ENCODE measurements at regions of chr11 and their contacts with region 1.

Region 1: GRCh38 chr11:83156150-83156995 is 558 bp upstream of the PCF11 start:
- DNase-seq: peak; percentile 100
- H3K4me3 ChIP-seq: peak overlapping the region; percentile 95
- H3K27ac ChIP-seq: peak overlapping the region; percentile 71
- H3K4me1 ChIP-seq: peaks cover 56% of the 10 kb centered on the region
- CTCF ChIP-seq: no peak

Region 2: DNA sequence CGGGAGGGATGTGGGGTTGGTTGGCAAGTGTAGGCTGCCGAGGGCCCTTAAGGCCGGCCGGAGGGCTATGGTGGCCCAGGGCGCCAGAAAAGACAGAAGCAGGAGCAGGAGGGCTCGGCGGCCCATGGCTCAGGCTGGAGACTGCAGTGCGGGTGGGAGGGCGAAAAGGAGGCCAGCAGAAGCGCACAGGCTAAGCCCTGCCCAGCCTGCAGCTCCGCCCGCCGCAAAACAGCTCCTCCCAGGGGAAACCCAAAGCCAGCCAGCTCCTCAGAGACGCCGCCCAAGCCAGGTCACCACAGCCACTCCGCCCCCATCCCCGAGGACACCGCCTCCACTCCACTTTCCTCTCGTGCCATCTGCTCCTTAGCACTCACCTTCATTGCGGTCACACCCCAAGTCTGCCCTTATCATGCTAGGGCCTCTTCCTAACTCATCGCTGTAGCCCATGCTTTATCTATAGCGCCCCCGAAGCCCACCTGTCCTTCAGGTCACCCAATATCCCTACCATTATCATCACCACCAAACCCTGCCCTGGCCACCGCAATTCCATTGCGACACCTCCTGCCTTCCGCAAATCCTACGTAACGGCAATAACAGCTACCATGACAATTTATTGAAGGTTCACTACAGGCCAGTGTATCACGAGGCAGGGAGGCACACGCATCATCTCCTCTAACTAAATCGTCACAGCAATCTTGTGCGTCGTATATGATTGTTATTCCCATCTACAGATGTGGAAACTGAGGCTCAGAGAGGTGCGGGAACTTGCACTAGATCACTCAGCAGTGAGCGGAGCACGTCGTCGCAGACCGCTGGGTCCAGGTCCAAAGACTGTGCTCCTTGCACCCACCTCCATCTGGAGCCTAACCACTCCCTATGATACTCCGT is 255.9 kb before region 1 on chr11 and contains the start of gene PRCP:
- CTCF ChIA-PET with region 1: no interaction called
- POLR2A ChIA-PET with region 1: interaction called, 36 read pairs
- intact Hi-C with region 1: loop called (anchors 2 kb)
- DNase-seq: peak; percentile 89
- H3K4me3 ChIP-seq: peak within 1 kb of the TSS; percentile 79
- H3K27ac ChIP-seq: peak within 1 kb of the TSS; percentile 67
- H3K4me1 ChIP-seq: peaks cover 55% of the 10 kb centered on the region
- CTCF ChIP-seq: peak; percentile 48
- total RNA-seq, gene PRCP: 6.5 and 11.0 TPM in 2 replicates

Region 3: GRCh38 chr11:83035070-83035854 is 121.1 kb before region 1 on chr11:
- CTCF ChIA-PET with region 1: no interaction called
- POLR2A ChIA-PET with region 1: no interaction called
- intact Hi-C with region 1: no loop called
- DNase-seq: peak; percentile 81
- H3K4me3 ChIP-seq: peak overlapping the region; percentile 2
- H3K27ac ChIP-seq: no peak overlapping the region
- H3K4me1 ChIP-seq: peaks cover 41% of the 10 kb centered on the region
- CTCF ChIP-seq: no peak

Region 4: DNA sequence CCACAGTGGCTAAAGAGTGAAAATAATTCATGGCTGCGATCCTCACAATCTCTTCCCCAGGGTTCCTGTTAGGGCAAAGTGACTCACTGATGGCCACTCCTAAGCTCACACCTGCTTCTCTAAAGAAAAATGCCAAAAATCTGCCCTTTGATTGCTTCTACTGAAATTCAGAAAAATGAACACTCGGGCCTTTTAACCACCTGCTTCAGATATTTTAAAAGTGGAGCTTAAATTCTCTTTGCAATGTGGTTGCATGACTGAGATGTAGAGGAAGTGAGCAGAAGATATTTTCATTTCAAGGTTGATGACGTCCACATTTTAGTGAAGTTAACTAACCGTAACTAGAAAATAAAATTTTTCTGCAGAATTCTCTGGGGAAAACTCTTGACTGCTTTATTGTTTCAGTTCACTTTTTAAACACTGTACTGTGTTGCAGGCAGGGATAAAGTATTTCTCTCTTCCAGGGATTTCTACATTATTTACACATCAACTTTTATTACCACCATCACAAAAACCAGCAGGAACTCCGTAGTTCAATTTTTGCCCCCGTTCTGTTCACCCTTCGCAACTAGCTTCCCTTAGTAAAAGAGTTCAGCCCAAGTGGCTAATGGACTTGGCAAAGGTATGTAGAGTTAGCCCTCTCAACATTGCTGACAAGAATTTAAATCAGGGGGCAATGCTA is 93.2 kb before region 1 on chr11:
- CTCF ChIA-PET with region 1: interaction called, 4 read pairs
- POLR2A ChIA-PET with region 1: interaction called, 13 read pairs
- intact Hi-C with region 1: loop called (anchors 1 kb)
- DNase-seq: peak; percentile 96
- H3K4me3 ChIP-seq: peak overlapping the region; percentile 62
- H3K27ac ChIP-seq: peak overlapping the region; percentile 100
- H3K4me1 ChIP-seq: peaks cover 95% of the 10 kb centered on the region
- CTCF ChIP-seq: no peak

Region 5: DNA sequence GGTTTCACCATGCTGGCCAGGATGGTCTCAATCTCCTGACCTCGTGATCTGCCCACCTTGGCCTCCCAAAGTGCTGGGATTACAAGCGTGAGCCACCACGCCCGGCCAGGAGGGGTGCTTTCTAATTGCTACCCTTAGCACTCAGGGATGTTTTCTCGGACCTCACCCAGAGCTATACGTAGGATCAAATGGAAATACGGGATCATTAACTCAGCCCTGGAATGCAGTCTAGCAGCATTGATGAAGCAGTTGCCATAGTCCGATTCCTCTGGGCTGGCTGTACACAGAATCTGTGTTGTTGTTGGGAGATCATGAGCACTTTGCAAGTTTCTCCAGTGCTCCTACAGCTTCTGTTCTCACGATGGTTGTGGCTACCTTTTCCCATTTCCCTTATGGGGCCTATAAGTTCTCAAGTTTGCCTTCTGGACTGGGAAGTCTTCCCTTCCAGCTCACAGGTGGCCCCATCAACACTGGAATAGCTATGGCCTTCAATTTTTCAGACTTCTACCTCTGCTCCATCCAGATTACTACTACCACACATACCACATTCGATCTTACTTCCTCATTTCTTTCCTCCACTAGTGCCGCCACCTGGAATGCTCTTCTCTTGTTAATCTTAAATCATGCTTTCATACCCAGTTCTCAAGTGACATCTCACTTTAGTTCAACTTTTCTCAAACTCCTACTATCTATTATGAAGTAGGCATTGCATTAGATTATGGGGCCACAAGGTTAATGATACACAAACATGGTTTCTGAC is 15.5 kb before region 1 on chr11:
- CTCF ChIA-PET with region 1: interaction called, 4 read pairs
- POLR2A ChIA-PET with region 1: interaction called, 24 read pairs
- intact Hi-C with region 1: no loop called
- DNase-seq: peak; percentile 63
- H3K4me3 ChIP-seq: no peak overlapping the region
- H3K27ac ChIP-seq: no peak overlapping the region
- H3K4me1 ChIP-seq: peaks cover 15% of the 10 kb centered on the region
- CTCF ChIP-seq: peak; percentile 33; the same call in 1 of the 2 replicates

Region 6: DNA sequence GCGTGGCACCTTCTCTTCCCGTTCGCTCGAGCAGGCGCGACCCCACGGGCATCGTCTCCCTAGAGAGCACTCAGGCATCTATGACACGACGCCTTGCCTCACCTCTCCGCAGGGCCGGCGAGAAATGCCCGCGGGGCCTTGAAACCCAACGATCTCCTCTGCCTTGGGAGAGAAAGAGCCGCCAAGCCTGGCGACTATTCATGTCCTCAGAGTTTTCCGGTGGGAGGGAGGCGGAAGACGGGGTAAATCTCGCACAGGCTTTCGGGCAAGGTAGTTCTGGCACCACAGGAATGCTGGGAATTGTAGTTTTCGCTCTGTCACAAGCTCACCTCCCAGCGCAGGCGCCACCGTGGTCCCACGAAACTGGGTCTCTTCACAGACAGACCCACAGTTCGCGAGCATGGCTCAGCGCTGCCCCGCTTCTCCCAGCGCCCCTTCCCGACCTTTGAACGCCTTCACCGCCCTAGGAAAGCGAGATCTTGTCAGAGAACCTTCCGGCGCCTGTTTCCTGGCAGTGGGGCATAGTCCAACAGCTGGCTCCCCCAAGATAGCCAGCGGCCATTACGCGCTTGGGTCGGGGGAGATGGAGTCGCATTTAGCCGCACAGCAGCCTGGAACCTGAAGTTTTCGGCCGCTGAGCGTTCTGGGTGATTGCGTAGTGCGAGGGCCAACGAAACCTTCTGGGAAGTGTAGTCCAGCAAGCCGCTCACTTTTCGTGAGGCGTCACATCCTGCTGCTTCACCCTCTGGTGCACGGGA is 129.6 kb after region 1 on chr11 and contains the start of gene CCDC90B:
- CTCF ChIA-PET with region 1: no interaction called
- POLR2A ChIA-PET with region 1: no interaction called
- intact Hi-C with region 1: loop called (anchors 1 kb)
- DNase-seq: peak; percentile 98
- H3K4me3 ChIP-seq: peak within 1 kb of the TSS; percentile 76
- H3K27ac ChIP-seq: peak within 1 kb of the TSS; percentile 76
- H3K4me1 ChIP-seq: peaks cover 60% of the 10 kb centered on the region
- CTCF ChIP-seq: no peak
- total RNA-seq, gene CCDC90B: 39.3 and 54.9 TPM in 2 replicates

Region 7: GRCh38 chr11:84847842-84848241 is 1691.5 kb after region 1 on chr11:
- CTCF ChIA-PET with region 1: no interaction called
- POLR2A ChIA-PET with region 1: no interaction called
- intact Hi-C with region 1: no loop called
- DNase-seq: no peak
- H3K4me3 ChIP-seq: no peak overlapping the region
- H3K27ac ChIP-seq: no peak overlapping the region
- H3K4me1 ChIP-seq: no peaks in the 10 kb centered on the region
- CTCF ChIP-seq: no peak